Tibial artery (tissue), 4 donors: ENCODE measurements at regions of chr6 and their contacts with region 1.

Region 1: DNA sequence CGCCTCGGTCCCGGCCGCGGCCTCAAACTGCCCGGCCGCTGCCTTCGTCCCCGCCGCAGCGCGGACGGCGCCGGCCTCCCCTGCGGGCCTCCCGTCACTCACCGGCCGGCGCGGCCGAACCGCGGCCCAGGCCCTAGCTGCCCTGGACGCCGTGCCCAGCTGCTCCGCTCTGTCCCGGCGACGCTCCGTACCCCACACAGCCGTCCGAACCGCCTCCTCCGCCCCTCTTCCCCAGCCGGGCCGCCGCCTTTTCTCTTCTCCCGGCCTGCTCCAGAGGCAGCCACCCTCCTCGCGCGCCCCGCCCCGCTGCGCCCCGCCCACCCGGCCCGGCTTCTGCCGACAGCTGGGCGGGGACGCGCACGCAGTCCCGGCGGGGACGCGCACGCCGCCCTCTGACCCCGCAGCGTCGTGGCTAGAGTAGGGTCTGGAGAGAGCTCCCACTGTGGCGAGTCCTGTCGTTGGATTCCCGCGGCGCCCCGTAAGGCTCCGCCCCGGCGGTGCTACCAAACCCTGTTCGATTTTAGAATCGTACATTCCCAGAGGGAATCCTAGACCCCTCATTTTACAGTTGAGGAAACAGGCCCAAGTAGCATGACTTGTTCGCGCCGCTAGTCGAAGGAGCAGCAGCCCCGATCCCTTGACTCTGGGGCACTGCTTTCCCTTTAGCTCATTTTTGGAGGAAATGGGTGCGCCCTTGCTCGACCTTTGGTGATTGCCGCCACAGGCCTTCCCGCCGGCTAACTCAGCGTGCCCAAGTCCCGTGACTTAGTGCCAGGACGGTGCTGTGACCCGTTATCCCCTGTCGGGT is at the start of gene FBXO30:
- DNase-seq: peak; percentile 84 to 93
- H3K4me3 ChIP-seq: peak within 1 kb of the TSS; percentile 72 to 73
- H3K27ac ChIP-seq: peak within 1 kb of the TSS; percentile 94 to 96
- H3K4me1 ChIP-seq: peaks cover 0 to 46% (median 21%) of the 10 kb centered on the region in 4 donors
- H3K27me3 ChIP-seq: no peaks in the 10 kb centered on the region
- CTCF ChIP-seq: peak; percentile 20 to 58

Region 2: GRCh38 chr6:145469021-145469420 is 345.7 kb before region 1 on chr6:
- intact Hi-C with region 1: no loop called
- DNase-seq: no peak
- H3K4me3 ChIP-seq: no peak overlapping the region
- H3K27ac ChIP-seq: no peak overlapping the region
- H3K4me1 ChIP-seq: no peaks in the 10 kb centered on the region
- H3K27me3 ChIP-seq: no peaks in the 10 kb centered on the region
- CTCF ChIP-seq: no peak

Region 3: GRCh38 chr6:146224988-146225387 is 410.3 kb after region 1 on chr6:
- intact Hi-C with region 1: no loop called
- DNase-seq: no peak
- H3K4me3 ChIP-seq: no peak overlapping the region
- H3K27ac ChIP-seq: no peak overlapping the region
- H3K4me1 ChIP-seq: no peaks in the 10 kb centered on the region
- H3K27me3 ChIP-seq: no peaks in the 10 kb centered on the region
- CTCF ChIP-seq: no peak

Region 4: DNA sequence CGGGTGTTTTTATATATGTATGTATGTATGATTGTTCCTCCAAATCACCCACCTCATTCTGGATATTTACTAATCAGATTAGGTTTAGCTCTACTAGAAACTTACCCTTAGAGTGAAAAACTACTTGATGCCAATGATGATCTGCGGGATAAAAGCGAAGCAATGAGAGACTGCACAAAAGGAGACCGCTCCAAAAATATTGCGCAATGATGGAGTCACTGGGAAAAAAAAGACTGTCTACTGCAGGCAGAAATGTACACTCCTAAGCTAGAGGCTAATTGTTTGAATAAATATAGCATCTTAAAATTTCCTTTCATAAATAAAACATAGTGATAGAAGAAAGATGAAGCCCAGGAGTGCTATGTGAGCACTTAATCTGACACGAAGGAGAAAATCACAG is 736.2 kb after region 1 on chr6:
- intact Hi-C with region 1: loop called (anchors 5 kb)
- DNase-seq: no peak
- H3K4me3 ChIP-seq: no peak overlapping the region
- H3K27ac ChIP-seq: no peak overlapping the region
- H3K4me1 ChIP-seq: peaks cover 0 to 58% (median 10%) of the 10 kb centered on the region in 4 donors
- H3K27me3 ChIP-seq: no peaks in the 10 kb centered on the region
- CTCF ChIP-seq: no peak